ENCODE measurements at regions of chr19 and their contacts with region 1.

Region 1: GRCh38 chr19:56105090-56105701 is 15.9 kb downstream of the ZNF787 start:
- DNase-seq: peak; percentile 71 to 79
- ATAC-seq: peak; percentile 91 to 94
- H3K4me3 ChIP-seq: peak overlapping the region in 3 of 4 donors; percentile 15 to 46 (median 29)
- H3K27ac ChIP-seq: peak overlapping the region; percentile 57 to 84 (median 79)
- H3K4me1 ChIP-seq: peaks cover 33 to 39% of the 10 kb centered on the region in 2 donors
- H3K27me3 ChIP-seq: no peaks in the 10 kb centered on the region
- CTCF ChIP-seq: peak; percentile 36 to 81 (median 66)
- POLR2A ChIP-seq: no peak

Region 2: GRCh38 chr19:56066152-56067023 is 38.8 kb before region 1 on chr19:
- in situ Hi-C with region 1: no loop called
- intact Hi-C with region 1: no loop called
- DNase-seq: peak in 1 of 2 donors; percentile 35
- ATAC-seq: peak in 1 of 2 donors; percentile 62
- H3K4me3 ChIP-seq: peak overlapping the region in 1 of 4 donors; percentile 7
- H3K27ac ChIP-seq: no peak overlapping the region
- H3K4me1 ChIP-seq: no peaks in the 10 kb centered on the region
- H3K27me3 ChIP-seq: peaks cover 0 to 5% (median 2%) of the 10 kb centered on the region in 3 donors
- CTCF ChIP-seq: peak; percentile 44 to 88 (median 71)
- POLR2A ChIP-seq: no peak

Region 3: GRCh38 chr19:56090931-56091490 is 14.2 kb before region 1 on chr19:
- in situ Hi-C with region 1: no loop called
- intact Hi-C with region 1: no loop called
- DNase-seq: peak in 1 of 2 donors; percentile 56
- ATAC-seq: peak; percentile 90 to 91
- H3K4me3 ChIP-seq: no peak overlapping the region
- H3K27ac ChIP-seq: peak overlapping the region; percentile 70 to 76 (median 70)
- H3K4me1 ChIP-seq: peaks cover 6 to 8% of the 10 kb centered on the region in 2 donors
- H3K27me3 ChIP-seq: no peaks in the 10 kb centered on the region
- CTCF ChIP-seq: no peak
- POLR2A ChIP-seq: peak; percentile 31

Region 4: DNA sequence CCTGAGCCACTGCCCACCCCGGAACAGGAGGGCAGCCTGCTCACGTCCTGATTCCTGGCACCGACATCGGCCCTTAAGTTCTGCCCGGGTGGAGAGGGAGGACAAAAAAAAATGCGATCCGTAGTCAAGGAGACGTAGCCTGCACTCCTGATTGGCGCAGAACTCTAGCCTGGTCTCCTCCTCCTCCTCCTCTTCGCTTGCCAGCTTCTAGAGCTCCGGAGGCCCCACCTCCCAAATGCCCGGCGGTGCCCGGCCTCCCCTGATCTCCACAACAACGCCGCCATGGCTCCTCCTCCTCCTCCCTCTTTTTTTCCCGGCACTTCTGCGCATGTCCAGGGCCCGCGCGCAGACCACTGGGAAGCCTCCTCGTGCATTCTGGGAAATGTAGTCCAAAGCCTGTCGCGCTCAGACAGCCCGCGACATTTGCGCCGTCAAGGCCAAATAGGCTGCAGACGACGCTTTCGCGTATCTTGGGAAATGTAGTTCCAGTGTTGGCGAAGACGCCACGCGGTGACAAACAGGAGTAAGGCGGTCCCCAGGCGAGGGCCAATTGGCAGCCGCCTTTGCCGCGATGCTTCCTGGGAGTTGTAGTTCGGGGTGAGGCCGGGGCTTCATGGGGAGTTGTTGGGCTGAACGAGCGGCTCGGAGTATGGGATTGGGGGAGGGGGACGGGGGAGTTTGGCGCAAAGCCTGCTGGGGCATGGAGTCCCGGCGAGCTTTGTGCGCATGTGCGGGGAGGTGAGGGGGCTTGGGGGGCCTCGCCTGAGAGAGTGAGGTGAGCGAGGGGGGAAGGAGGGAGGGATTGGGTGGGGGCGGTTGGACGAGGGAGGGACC is 35.6 kb after region 1 on chr19 and contains the start of gene ZNF444:
- in situ Hi-C with region 1: no loop called
- intact Hi-C with region 1: loop called (anchors 5 kb)
- DNase-seq: peak; percentile 98 to 99
- ATAC-seq: peak; percentile 96
- H3K4me3 ChIP-seq: peak within 1 kb of the TSS; percentile 57 to 76 (median 60)
- H3K27ac ChIP-seq: peak within 1 kb of the TSS; percentile 84 to 89 (median 86)
- H3K4me1 ChIP-seq: peaks cover 11 to 21% of the 10 kb centered on the region in 2 donors
- H3K27me3 ChIP-seq: no peaks in the 10 kb centered on the region
- CTCF ChIP-seq: no peak
- POLR2A ChIP-seq: peak; percentile 52 to 54
- total RNA-seq, gene ZNF444: 16.4 to 38.9 (median 24.9) TPM

Region 5: GRCh38 chr19:56170261-56170660 is 65.1 kb after region 1 on chr19:
- in situ Hi-C with region 1: no loop called
- intact Hi-C with region 1: loop called (anchors 1 kb)
- DNase-seq: no peak
- ATAC-seq: peak in 1 of 2 donors; percentile 36
- H3K4me3 ChIP-seq: no peak overlapping the region
- H3K27ac ChIP-seq: no peak overlapping the region
- H3K4me1 ChIP-seq: no peaks in the 10 kb centered on the region
- H3K27me3 ChIP-seq: peaks cover 0 to 8% (median 3%) of the 10 kb centered on the region in 3 donors
- CTCF ChIP-seq: no peak
- POLR2A ChIP-seq: no peak

Region 6: GRCh38 chr19:57803594-57804325 is 1698.6 kb after region 1 on chr19:
- in situ Hi-C with region 1: no loop called
- intact Hi-C with region 1: loop called (anchors 10 kb)
- DNase-seq: no peak
- ATAC-seq: peak; percentile 42 to 54
- H3K4me3 ChIP-seq: peak overlapping the region; percentile 44 to 65 (median 52)
- H3K27ac ChIP-seq: peak overlapping the region; percentile 50 to 77 (median 62)
- H3K4me1 ChIP-seq: peaks cover 9 to 29% of the 10 kb centered on the region in 2 donors
- H3K27me3 ChIP-seq: no peaks in the 10 kb centered on the region
- CTCF ChIP-seq: no peak
- POLR2A ChIP-seq: no peak

Measured in gastrocnemius medialis (tissue), 4 donors.